ENCODE measurements at regions of chr6 and their contacts with region 1.

Region 1: DNA sequence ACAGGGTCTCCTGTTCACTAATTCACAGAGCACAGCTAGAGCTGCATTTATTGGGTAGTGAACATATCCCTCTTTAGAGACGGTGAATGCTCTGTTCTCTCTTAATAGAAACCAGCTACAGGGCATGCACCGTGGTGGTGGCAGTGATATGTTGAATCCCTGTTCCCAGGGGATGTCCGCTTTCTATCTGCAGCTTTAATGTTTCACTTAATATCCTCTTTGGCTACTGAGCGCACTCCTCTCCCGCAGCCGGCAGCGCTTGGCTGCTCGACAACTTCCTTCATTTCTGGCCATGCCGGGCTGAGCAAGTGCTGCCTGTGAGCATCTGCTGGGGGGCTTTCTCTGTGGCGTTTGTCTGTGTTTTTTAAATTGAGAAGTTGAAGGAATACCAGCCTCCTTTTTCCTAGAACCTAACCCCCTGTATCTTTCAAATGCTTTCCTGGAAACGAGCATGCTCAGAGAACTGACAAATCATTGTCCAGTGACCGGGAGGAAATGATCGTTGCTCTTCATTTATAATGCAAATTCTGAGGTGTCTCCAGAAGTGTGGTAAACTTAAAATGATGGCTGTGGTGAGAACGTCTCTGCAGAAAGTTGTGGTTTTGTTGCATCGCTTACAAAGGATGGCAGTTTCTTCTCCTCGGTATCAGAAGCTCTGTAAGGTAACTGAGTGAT is 297.9 kb downstream of the UTRN start:
- DNase-seq: no peak
- ATAC-seq: peak; percentile 22; the same call in 1 of the 2 replicates
- H3K4me3 ChIP-seq: peak overlapping the region; percentile 53
- H3K27ac ChIP-seq: no peak overlapping the region
- H3K4me1 ChIP-seq: no peaks in the 10 kb centered on the region
- H3K27me3 ChIP-seq: no peaks in the 10 kb centered on the region
- CTCF ChIP-seq: no peak

Region 2: GRCh38 chr6:144718431-144718830 is 135.4 kb after region 1 on chr6:
- CTCF ChIA-PET with region 1: no interaction called
- POLR2A ChIA-PET with region 1: no interaction called
- intact Hi-C with region 1: no loop called
- DNase-seq: peak; percentile 57
- ATAC-seq: peak; percentile 69
- H3K4me3 ChIP-seq: no peak overlapping the region
- H3K27ac ChIP-seq: peak overlapping the region; percentile 29; the same call in 1 of the 2 replicates
- H3K4me1 ChIP-seq: peaks cover 49% of the 10 kb centered on the region
- H3K27me3 ChIP-seq: no peaks in the 10 kb centered on the region
- CTCF ChIP-seq: no peak

Region 3: DNA sequence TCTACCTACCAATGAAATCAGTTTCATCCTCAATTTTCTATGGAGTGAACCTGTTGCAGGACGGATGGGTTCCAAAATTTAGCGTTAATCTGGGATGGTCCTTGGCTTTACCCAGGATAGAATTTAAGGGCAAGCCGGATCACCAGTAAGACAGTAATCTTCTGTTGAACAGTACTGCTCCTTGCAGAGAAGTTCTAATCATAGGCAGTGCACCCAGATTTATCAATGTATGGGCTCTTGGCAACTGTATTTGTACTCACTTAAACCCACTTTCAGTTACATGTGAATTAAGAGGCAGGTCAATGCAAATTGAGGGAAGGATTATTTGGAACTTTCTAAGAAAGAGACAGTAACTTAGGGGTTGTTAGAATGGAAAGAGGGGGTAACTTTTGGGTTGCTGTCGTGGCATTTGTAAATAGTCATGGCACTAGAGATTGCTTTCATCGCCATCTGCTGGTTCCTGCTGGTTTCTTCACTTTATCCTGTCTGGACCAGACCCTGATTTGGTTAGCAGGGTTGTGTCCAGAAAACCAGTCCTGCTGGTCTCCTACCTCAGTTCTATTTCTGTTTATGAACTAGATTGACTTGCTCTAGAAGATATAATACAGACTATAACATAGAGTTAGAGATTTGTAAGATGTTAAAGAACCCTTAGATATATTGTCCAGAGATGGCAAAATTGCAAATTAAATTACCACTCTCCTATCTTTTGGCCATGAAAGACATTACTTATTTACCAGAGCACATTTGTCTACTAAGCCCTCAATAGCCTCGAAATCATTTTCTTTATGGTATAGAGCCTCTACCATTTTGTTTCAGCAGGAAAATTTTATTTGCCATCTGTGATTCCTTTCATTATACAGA is 348.3 kb after region 1 on chr6:
- CTCF ChIA-PET with region 1: no interaction called
- POLR2A ChIA-PET with region 1: no interaction called
- intact Hi-C with region 1: loop called (anchors 5 kb)
- DNase-seq: peak; percentile 66
- ATAC-seq: peak; percentile 67
- H3K4me3 ChIP-seq: no peak overlapping the region
- H3K27ac ChIP-seq: peak overlapping the region; percentile 36
- H3K4me1 ChIP-seq: no peaks in the 10 kb centered on the region
- H3K27me3 ChIP-seq: no peaks in the 10 kb centered on the region
- CTCF ChIP-seq: peak; percentile 71

Region 4: DNA sequence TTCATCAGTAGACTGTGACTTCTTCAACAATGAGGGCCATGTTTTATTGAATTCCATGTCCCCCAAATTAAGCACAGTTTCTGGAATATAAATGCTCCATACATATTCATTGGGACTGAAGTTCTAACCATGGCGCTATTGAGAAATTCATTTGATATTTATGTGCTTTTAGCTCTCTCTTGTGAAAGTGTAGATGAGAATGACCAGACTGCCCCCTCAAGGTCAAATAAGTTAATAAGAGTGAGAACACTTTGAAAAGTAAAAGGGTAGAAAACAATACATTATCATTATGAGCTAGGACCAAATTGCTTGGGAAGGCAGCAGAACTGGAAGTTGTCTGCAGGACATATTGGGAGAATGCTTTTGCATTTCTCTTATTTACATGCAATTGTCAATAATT is 554.4 kb after region 1 on chr6:
- CTCF ChIA-PET with region 1: no interaction called
- POLR2A ChIA-PET with region 1: interaction called, 3 read pairs
- intact Hi-C with region 1: loop called (anchors 1 kb)
- DNase-seq: peak; percentile 42
- ATAC-seq: peak; percentile 35; the same call in 1 of the 2 replicates
- H3K4me3 ChIP-seq: no peak overlapping the region
- H3K27ac ChIP-seq: no peak overlapping the region
- H3K4me1 ChIP-seq: no peaks in the 10 kb centered on the region
- H3K27me3 ChIP-seq: no peaks in the 10 kb centered on the region
- CTCF ChIP-seq: peak; percentile 61

Region 5: DNA sequence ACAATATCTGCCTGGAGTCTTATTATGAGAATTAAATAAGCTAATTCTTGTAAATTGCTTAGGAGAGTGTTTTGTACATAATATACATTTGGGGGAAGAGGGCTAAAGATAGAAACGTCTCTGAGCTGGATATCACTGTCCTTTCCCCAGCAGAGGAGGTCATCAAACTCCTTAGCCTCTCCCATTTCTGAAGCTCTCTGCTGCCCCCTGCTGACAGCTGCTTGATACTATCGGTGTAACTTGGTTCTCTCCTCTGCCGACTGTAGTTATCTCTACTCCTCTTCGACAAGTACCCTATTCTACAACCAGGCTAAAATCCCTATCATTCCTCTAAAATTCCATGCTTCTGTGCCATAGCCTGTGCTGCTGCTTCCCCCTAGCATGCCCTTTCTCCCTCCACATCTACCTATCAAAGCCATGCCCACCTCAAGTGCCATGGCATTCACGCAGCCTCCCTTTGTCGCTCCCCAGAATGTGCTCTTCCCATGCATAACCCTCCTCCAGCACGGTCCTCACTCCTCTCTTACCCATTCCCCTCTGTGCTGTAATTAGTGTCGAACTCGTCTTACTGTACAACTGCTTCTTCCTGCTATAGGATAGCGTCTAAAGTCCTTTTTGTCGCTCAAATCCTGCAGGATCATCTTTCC is 1051.0 kb after region 1 on chr6:
- CTCF ChIA-PET with region 1: no interaction called
- POLR2A ChIA-PET with region 1: no interaction called
- intact Hi-C with region 1: loop called (anchors 10 kb)
- DNase-seq: peak; percentile 86
- ATAC-seq: peak; percentile 82
- H3K4me3 ChIP-seq: no peak overlapping the region
- H3K27ac ChIP-seq: no peak overlapping the region
- H3K4me1 ChIP-seq: no peaks in the 10 kb centered on the region
- H3K27me3 ChIP-seq: no peaks in the 10 kb centered on the region
- CTCF ChIP-seq: peak; percentile 81

Measured in PC-3 (cell line).